K562 (cell line): ENCODE measurements at regions of chr1 and their contacts with region 1.

Region 1: GRCh38 chr1:89706700-89707012 is 73.7 kb downstream of the LRRC8C start:
- DNase-seq: no peak
- ATAC-seq: no peak
- H3K4me3 ChIP-seq: no peak overlapping the region
- H3K27ac ChIP-seq: no peak overlapping the region
- H3K4me1 ChIP-seq: peaks cover 0 to 38% of the 10 kb centered on the region in 2 experiments
- H3K27me3 ChIP-seq: no peaks in the 10 kb centered on the region
- CTCF ChIP-seq: no peak
- EP300 ChIP-seq: no peak
- POLR2A ChIP-seq: no peak
- RAD21 ChIP-seq: no peak

Region 2: DNA sequence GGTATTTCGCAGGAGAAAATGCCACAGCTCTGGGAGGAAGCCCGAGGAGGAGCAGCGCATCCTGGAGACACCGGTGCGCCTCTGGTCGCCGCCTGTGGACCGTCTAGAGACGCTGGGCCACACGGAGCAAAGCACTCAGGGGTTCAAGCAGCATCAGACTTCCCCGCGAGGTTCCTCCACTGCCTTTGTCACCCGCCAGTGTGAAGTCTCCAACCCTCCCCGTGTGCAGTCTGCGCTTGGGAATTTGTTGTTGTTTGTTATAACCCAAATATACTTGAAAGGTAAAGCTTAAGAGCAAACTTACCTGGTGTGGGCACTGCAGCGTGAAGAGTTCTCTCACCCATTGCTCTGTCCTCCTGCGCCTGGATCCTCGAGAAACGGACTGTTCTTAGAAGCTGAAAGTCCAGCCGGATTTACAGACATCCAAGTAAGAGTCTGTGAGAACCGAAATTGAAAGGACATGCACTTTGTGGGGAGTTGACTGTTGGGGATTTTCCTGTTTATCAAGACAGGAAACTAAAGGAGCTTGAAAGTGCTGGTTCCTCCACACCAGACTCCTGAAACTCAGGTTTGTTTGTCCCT is 508.1 kb before region 1 on chr1 and contains the start of gene GBP4:
- CTCF ChIA-PET with region 1: no interaction called
- POLR2A ChIA-PET with region 1: no interaction called
- in situ Hi-C with region 1: no loop called
- intact Hi-C with region 1: no loop called
- DNase-seq: no peak
- ATAC-seq: peak; percentile 73
- H3K4me3 ChIP-seq: no peak within 1 kb of the TSS
- H3K27ac ChIP-seq: no peak within 1 kb of the TSS
- H3K4me1 ChIP-seq: no peaks in the 10 kb centered on the region
- H3K27me3 ChIP-seq: peaks cover 5 to 8% of the 10 kb centered on the region in 2 experiments; a peak in 2 of 5 replicates
- CTCF ChIP-seq: no peak
- EP300 ChIP-seq: no peak
- POLR2A ChIP-seq: no peak
- RAD21 ChIP-seq: no peak
- polyA plus RNA-seq, gene GBP4: 0.04 to 0.11 TPM

Region 3: GRCh38 chr1:89538361-89538760 is 168.3 kb before region 1 on chr1:
- CTCF ChIA-PET with region 1: no interaction called
- POLR2A ChIA-PET with region 1: no interaction called
- in situ Hi-C with region 1: no loop called
- intact Hi-C with region 1: loop called (anchors 10 kb)
- DNase-seq: peak in 2 of 4 experiments; percentile 73 to 79
- ATAC-seq: peak; percentile 59
- H3K4me3 ChIP-seq: no peak overlapping the region
- H3K27ac ChIP-seq: peak overlapping the region; percentile 73
- H3K4me1 ChIP-seq: peaks cover 14 to 75% of the 10 kb centered on the region in 2 experiments
- H3K27me3 ChIP-seq: no peaks in the 10 kb centered on the region
- CTCF ChIP-seq: no peak
- EP300 ChIP-seq: peak; percentile 86
- POLR2A ChIP-seq: no peak
- RAD21 ChIP-seq: no peak

Region 4: DNA sequence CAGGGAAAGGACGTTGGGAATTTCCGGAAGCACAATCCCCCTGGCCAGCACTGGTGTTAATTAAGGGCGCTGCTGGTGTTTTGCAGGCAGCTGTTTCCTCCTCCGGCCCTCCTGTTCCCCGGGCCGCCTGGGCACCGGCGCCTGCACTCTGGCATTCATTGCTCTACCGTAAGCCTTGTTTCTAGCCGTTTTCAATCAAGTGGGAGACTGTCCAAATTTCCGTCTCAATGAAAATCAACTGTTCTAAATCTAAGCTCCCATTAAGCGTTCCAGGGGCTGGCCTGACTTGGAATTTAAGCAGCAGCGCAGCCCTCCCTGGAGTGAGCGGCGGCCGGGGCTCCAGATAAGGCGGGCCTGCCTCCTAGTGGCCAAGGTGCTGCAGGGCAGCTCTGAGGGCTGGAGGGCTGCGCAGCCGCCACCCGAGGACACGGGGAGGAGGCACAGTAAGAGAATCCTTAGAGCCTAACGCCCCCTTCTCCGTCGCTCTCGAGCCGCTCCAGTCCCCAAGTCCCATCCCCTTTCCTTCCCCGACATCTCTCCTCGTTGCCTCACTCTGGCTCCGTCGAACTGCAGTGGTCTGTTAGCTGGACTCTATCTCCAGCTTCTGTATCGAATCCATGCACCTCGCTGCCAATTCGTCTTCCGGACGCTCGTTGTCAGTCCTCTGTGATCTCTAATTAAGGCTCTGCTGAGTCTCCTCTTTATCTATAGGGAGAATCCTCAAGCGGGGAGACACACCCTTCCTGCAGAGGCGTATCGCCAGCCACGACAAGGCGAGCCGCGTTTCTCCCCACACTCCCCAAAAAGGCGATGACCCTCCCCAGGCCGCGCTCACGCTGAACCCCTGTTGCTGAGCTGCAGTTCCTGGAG is 56.4 kb after region 1 on chr1:
- CTCF ChIA-PET with region 1: no interaction called
- POLR2A ChIA-PET with region 1: interaction called, 6 read pairs
- in situ Hi-C with region 1: no loop called
- intact Hi-C with region 1: loop called (anchors 5 kb)
- DNase-seq: peak; percentile 88 to 92 (median 90)
- ATAC-seq: peak; percentile 100
- H3K4me3 ChIP-seq: peak overlapping the region; percentile 36
- H3K27ac ChIP-seq: peak overlapping the region; percentile 35; the same call in 1 of the 3 replicates
- H3K4me1 ChIP-seq: peaks cover 15 to 17% of the 10 kb centered on the region in 2 experiments
- H3K27me3 ChIP-seq: no peaks in the 10 kb centered on the region; a peak in 1 of 5 replicates
- CTCF ChIP-seq: peak; percentile 96 to 98 (median 97)
- EP300 ChIP-seq: peak; percentile 46; the same call in 1 of the 2 replicates
- POLR2A ChIP-seq: no peak
- RAD21 ChIP-seq: peak; percentile 98 to 99